ENCODE measurements at regions of chr10 and their contacts with region 1.

Region 1: GRCh38 chr10:31020209-31020608 is 11.5 kb downstream of the ZNF438 start:
- DNase-seq: no peak
- ATAC-seq: peak in 1 of 2 donors; percentile 64

Region 2: GRCh38 chr10:30915146-30915545 is 105.1 kb before region 1 on chr10:
- intact Hi-C with region 1: loop called in 1 of 2 experiments (anchors 10 kb)
- DNase-seq: no peak
- ATAC-seq: no peak

Region 3: DNA sequence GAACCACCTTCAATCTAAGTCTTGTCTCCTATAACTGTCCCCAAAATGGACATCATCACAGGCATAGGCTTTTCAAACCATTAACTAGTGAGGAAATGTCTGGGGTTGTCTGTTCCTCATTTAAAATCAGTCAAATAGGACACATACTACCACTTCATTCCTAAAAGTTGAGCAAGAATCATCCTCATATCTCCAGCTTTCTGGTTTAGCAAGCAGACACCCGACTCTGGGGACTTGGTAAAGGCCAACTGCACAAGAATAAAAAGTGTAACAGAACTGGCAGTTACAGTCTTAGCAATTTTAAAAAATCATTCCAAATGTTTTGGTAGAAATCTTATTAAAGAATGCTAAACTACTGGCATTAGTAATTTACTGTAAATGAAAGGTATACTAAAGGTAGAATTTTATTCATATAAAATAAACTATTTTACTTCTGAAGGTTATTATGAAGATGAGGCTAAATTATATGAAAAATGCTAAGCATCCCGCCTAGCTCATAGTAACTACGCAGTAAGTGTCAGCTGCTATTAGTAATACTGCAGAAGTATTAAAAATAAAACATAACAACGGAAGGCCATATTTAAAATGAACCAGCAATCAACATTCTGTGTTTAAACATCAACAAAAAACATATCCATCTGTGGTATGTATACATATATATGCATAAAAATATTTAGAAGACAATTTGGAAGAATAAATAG is 49.3 kb before region 1 on chr10:
- intact Hi-C with region 1: loop called in 1 of 2 experiments (anchors 10 kb)
- DNase-seq: no peak
- ATAC-seq: peak; percentile 15 to 48